ENCODE measurements at regions of chr3 and their contacts with region 1.

Region 1: DNA sequence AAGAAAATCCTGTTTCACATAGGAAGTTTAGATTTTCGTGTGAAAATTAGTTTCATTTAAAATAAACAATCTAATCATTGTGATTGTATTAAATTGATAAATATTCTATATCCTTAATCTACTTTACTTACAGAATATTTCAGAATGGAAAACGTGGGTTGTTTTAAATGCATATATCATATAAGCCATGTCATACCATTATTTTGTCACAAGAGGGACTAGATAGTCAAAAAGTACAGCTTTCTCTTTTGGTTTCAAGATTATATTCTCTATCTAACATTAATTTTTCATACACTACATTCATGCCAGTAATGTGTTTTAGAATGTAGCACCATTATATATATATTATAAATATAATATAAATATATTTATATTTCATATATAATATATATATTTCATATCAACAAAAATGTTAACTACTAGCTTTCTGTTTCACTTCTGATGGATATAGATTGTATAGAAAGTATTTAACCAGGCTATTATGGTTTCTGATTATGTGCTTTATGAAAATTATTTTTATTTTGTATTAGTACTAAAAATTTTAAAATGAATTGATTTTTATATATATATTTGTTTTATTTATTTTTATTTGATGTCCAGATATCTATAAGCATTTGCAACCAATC is 45.3 kb downstream of the OSTN start:
- DNase-seq: peak; percentile 57
- H3K4me3 ChIP-seq: no peak overlapping the region
- H3K27ac ChIP-seq: no peak overlapping the region
- H3K4me1 ChIP-seq: peaks cover 29% of the 10 kb centered on the region
- CTCF ChIP-seq: peak; percentile 87

Region 2: GRCh38 chr3:191263365-191263764 is 19.0 kb after region 1 on chr3:
- CTCF ChIA-PET with region 1: no interaction called
- POLR2A ChIA-PET with region 1: interaction called, 14 read pairs
- intact Hi-C with region 1: no loop called
- DNase-seq: peak; percentile 44
- H3K4me3 ChIP-seq: peak overlapping the region; percentile 51
- H3K27ac ChIP-seq: peak overlapping the region; percentile 62
- H3K4me1 ChIP-seq: peaks cover 43% of the 10 kb centered on the region
- CTCF ChIP-seq: no peak

Region 3: DNA sequence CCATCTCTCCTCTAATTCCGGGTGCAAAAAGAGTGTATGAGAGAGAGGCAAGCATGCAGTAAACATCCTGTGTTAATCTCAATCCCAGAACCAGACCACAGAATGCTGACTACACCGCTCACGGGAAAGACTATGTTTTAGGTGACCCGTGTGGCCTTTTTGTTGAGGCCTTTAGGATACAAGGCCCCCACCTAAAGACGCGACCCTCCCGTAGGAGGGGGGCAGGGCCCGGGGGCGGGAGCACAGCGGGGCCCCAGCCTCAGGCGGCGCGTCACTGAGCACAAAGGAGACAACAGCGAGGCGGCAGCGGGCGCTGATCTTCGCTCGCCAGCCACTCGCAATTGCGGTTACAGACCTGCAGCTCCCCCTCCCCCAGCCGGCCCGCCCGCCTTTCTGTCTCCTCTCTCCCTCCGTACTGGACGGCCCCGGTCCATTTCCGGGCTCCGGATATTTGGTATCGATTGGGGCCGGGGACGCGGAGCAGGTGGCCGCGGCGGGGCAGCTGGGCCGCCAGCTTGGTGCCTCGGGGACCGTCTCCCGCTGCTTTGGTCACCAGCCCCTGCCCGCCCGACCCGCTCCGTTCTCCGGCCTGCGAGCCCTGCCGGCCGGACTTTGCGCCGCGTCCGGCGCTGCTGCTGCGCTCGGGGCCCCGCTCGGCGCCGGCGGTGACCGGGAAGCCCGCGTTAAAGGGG is 84.8 kb after region 1 on chr3 and contains the start of gene CCDC50:
- CTCF ChIA-PET with region 1: no interaction called
- POLR2A ChIA-PET with region 1: interaction called, 5 read pairs
- intact Hi-C with region 1: loop called (anchors 2 kb)
- DNase-seq: peak; percentile 82
- H3K4me3 ChIP-seq: peak within 1 kb of the TSS; percentile 95
- H3K27ac ChIP-seq: peak within 1 kb of the TSS; percentile 62
- H3K4me1 ChIP-seq: peaks cover 57% of the 10 kb centered on the region
- CTCF ChIP-seq: no peak
- total RNA-seq, gene CCDC50: 31.4 and 32.2 TPM in 2 replicates

Region 4: DNA sequence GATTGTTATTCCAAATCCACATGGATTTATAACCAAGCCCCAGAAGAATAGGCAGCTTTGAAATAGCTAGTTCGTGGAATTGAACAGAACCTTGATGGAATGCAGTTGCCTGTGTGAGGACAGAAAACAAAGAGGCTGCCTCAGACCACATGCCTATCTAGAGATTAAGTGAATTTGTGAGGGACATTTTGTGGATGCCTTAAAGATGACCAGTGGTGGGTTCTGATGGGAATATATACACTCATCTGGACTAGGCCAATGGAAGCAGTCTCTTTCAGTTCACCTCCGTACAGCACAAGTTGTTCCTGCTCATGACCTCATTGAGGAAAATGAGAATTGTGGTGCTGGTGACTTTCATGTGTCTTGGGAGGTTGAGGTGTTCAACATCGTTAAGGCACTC is 153.4 kb after region 1 on chr3:
- CTCF ChIA-PET with region 1: no interaction called
- POLR2A ChIA-PET with region 1: no interaction called
- intact Hi-C with region 1: loop called (anchors 5 kb)
- DNase-seq: no peak
- H3K4me3 ChIP-seq: no peak overlapping the region
- H3K27ac ChIP-seq: no peak overlapping the region
- H3K4me1 ChIP-seq: no peaks in the 10 kb centered on the region
- CTCF ChIP-seq: no peak

Region 5: DNA sequence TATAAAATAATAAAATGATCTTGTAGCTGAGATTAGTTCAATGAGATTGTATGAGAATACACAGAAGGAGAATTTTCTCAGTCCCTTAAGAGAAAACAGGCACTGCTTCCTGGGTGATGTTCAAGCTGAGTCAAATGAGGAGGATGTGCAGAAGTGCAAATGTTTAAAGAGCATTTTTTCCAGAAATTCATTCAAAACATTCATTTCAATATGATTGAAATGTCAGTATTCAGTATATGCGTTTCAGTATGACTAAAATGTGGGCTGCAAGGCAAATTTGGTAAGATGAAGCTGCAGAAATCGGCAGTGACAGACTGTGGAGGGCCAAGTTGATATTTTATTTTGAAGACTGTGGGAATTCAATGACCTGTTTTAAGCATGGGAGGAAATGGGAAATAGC is 197.3 kb after region 1 on chr3:
- CTCF ChIA-PET with region 1: no interaction called
- POLR2A ChIA-PET with region 1: no interaction called
- intact Hi-C with region 1: no loop called
- DNase-seq: no peak
- H3K4me3 ChIP-seq: no peak overlapping the region
- H3K27ac ChIP-seq: no peak overlapping the region
- H3K4me1 ChIP-seq: no peaks in the 10 kb centered on the region
- CTCF ChIP-seq: no peak

Measured in OCI-LY7 (cell line).